Endothelial cell of umbilical vein (primary cell): ENCODE measurements at regions of chr11 and their contacts with region 1.

Region 1: GRCh38 chr11:73779084-73779902 is 8.4 kb upstream of the MRPL48 start:
- DNase-seq: peak; percentile 99
- H3K4me3 ChIP-seq: peak overlapping the region; percentile 36 to 74 (median 46)
- H3K27ac ChIP-seq: peak overlapping the region; percentile 87
- H3K4me1 ChIP-seq: peaks cover 4% of the 10 kb centered on the region
- H3K27me3 ChIP-seq: no peaks in the 10 kb centered on the region
- CTCF ChIP-seq: no peak
- POLR2A ChIP-seq: peak; percentile 94

Region 2: DNA sequence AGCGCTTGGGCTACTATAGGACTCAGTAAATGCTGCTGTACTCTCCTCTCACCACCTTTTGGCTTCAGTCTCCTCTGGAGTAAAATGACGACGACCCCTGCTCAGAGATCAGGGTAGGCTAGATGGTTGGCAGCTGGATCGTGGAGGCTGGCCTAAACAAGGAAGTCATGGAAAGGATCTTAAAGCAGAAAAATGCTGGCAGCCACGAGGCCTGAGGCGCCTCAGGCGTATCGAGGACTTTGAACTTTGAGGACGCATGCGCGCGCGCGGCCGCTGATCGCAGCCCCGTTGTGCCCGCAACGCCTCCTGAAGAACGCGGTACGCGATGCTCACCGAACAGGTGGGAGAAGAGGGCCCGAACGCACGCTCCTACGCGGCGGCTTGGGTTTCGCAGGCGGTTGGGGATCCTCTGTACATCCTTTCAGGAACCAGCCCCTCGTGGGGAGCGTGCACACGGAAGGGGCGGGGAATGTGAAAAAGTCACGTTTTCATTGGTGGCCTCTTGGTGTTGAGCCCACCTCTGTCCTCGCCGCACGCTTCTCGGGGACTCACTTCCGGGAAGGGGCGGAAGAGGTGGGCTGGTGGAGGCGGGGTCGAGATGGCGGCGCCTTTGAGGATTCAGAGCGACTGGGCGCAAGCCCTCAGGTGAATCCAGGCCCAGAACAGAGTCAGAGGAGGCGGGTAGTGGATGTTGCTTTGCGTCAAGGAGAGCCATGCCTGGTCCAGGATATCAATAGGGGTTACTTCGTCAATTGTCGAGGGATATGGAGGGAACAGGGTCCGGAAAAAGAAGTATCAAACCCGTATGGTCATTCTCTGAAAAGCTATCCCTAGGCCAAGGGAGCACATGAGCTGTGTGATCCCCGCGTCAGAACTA is 97.4 kb after region 1 on chr11 and contains the starts of genes COA4 and PAAF1:
- CTCF ChIA-PET with region 1: no interaction called
- POLR2A ChIA-PET with region 1: no interaction called
- dilution Hi-C with region 1: no loop called
- intact Hi-C with region 1: loop called (anchors 1 kb)
- DNase-seq: peak; percentile 98
- H3K4me3 ChIP-seq: peak within 1 kb of the TSS; percentile 83 to 97 (median 93)
- H3K27ac ChIP-seq: peak within 1 kb of the TSS; percentile 60
- H3K4me1 ChIP-seq: peaks cover 16% of the 10 kb centered on the region
- H3K27me3 ChIP-seq: no peaks in the 10 kb centered on the region
- CTCF ChIP-seq: no peak
- POLR2A ChIP-seq: peak; percentile 79
- total RNA-seq, gene COA4: 58.1 and 72.1 TPM in 2 replicates
- total RNA-seq, gene PAAF1: 14.5 and 16.1 TPM in 2 replicates